HCT116 (cell line): ENCODE measurements at regions of chr7 and their contacts with region 1.

Region 1: DNA sequence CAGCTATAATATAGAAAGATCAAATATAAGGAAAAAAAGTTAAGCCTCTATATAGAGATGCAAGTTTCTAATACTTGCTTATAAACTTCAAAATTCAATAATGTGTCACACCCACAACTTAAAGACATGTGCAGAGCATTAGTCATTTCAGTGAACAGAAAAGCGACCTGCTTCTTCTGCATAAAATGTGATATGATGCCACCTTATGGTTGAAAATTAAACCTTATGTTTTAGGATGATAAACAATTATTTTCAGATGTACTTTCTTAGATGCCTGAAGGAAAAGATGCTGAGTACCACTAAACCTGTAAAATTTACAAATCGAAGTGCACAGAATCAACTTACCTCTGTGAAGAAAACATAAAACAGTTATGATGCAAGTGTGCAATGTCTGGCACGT is 96.0 kb downstream of the MTERF1 start:
- DNase-seq: peak; percentile 34
- ATAC-seq: peak; percentile 60
- H3K4me3 ChIP-seq: no peak overlapping the region
- H3K27ac ChIP-seq: no peak overlapping the region
- H3K4me1 ChIP-seq: no peaks in the 10 kb centered on the region
- H3K27me3 ChIP-seq: peaks cover 8% of the 10 kb centered on the region; the same call in 1 of the 2 replicates
- CTCF ChIP-seq: peak in 2 of 3 experiments; percentile 49 to 53; a peak in 3 of 6 replicates
- POLR2A ChIP-seq: no peak
- RAD21 ChIP-seq: peak; percentile 75

Region 2: DNA sequence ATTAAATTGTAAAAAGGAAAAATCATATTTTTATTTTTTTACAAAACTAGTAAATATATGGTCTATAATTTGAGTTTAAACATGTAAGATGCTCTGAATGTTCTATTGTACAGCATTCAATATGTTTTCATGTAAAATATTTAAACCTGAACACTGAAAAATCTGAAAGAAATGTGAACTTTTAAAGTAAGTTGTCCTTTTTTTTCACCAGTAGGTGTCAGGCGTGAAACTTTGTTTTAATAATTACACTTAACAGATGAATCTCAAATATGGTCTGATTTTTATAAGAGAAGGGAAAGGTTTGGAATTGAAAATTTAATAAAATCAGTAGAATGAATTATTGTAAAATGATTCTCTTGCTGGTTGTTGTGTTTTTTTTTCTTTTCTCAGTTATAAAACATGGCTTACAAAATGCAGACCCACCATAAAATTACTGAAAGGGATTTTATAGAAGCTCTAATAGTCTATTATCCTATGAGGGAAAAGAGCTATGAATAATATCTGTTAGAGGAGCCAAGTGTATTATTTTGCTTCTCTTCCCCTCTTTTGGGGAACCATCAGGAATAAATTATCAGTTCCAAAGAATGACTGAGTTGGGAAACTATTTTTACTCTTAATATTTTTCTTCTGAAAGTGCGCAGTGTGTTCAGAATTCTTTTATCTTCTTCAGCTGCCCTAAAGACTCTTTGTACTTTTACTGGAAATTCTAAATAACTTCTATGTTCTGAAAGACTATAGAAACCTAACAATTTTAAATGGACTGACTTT is 738.0 kb before region 1 on chr7:
- CTCF ChIA-PET with region 1: no interaction called
- POLR2A ChIA-PET with region 1: no interaction called
- RAD21 ChIA-PET with region 1: no interaction called
- intact Hi-C with region 1: loop called (anchors 2 kb)
- DNase-seq: no peak
- ATAC-seq: no peak
- H3K4me3 ChIP-seq: no peak overlapping the region
- H3K27ac ChIP-seq: no peak overlapping the region
- H3K4me1 ChIP-seq: no peaks in the 10 kb centered on the region
- H3K27me3 ChIP-seq: no peaks in the 10 kb centered on the region
- CTCF ChIP-seq: peak; percentile 16 to 55 (median 30); a peak in 3 of 6 replicates
- POLR2A ChIP-seq: no peak
- RAD21 ChIP-seq: peak; percentile 51; the same call in 1 of the 2 replicates

Region 3: GRCh38 chr7:91082852-91083495 is 701.5 kb before region 1 on chr7:
- CTCF ChIA-PET with region 1: interaction called, 6 read pairs
- POLR2A ChIA-PET with region 1: no interaction called
- RAD21 ChIA-PET with region 1: no interaction called
- intact Hi-C with region 1: loop called (anchors 2 kb)
- DNase-seq: no peak
- ATAC-seq: no peak
- H3K4me3 ChIP-seq: no peak overlapping the region
- H3K27ac ChIP-seq: no peak overlapping the region
- H3K4me1 ChIP-seq: no peaks in the 10 kb centered on the region
- H3K27me3 ChIP-seq: no peaks in the 10 kb centered on the region
- CTCF ChIP-seq: peak; percentile 32 to 52 (median 39); a peak in 4 of 6 replicates
- POLR2A ChIP-seq: no peak
- RAD21 ChIP-seq: peak; percentile 49

Region 4: DNA sequence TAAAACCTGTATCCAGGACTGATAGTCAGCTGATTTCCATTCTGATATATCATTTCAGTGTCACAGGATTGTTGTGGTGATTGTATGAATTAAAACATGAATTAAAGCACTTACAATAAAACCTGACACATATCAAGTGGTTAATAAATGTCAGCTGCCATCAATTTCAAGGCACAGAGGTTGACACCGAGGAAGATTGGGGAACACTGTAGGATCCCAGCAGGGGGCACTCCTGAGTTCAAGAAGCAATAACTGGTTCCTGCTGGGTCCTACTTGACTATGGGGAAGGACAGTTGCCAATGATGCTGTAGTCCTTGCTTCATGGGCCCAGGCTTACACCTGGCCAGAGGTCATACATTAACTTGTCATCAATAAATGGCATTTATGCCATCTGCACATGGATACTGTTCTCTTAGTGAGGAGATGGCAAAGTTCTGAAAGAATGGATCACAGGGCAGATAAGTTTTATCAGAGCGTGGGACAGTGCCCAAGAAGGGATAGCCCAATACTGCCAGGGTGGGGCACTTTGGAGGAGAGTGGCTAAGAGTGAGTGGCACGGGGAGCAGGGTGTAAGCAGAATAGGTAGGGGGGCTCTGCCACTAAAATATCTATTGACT is 496.1 kb before region 1 on chr7:
- CTCF ChIA-PET with region 1: interaction called, 5 read pairs
- POLR2A ChIA-PET with region 1: no interaction called
- RAD21 ChIA-PET with region 1: interaction called in 1 of 2 experiments, 3 read pairs
- intact Hi-C with region 1: loop called (anchors 10 kb)
- DNase-seq: peak; percentile 27
- ATAC-seq: peak; percentile 84
- H3K4me3 ChIP-seq: no peak overlapping the region
- H3K27ac ChIP-seq: no peak overlapping the region
- H3K4me1 ChIP-seq: no peaks in the 10 kb centered on the region
- H3K27me3 ChIP-seq: peaks cover 7% of the 10 kb centered on the region; the same call in 1 of the 2 replicates
- CTCF ChIP-seq: peak; percentile 27 to 69 (median 55); a peak in 5 of 6 replicates
- POLR2A ChIP-seq: no peak
- RAD21 ChIP-seq: peak; percentile 56